PC-3 (cell line): ENCODE measurements at regions of chr6 and their contacts with region 1.

Region 1: GRCh38 chr6:160005861-160006540 is 37.1 kb downstream of the IGF2R start:
- DNase-seq: no peak
- ATAC-seq: no peak
- H3K4me3 ChIP-seq: no peak overlapping the region
- H3K27ac ChIP-seq: no peak overlapping the region
- H3K4me1 ChIP-seq: no peaks in the 10 kb centered on the region
- H3K27me3 ChIP-seq: no peaks in the 10 kb centered on the region
- CTCF ChIP-seq: no peak

Region 2: GRCh38 chr6:159899994-159900745 is 105.8 kb before region 1 on chr6:
- CTCF ChIA-PET with region 1: no interaction called
- POLR2A ChIA-PET with region 1: interaction called, 19 read pairs
- intact Hi-C with region 1: no loop called
- DNase-seq: peak; percentile 89
- ATAC-seq: peak; percentile 93
- H3K4me3 ChIP-seq: peak overlapping the region; percentile 53
- H3K27ac ChIP-seq: peak overlapping the region; percentile 96
- H3K4me1 ChIP-seq: peaks cover 23% of the 10 kb centered on the region
- H3K27me3 ChIP-seq: no peaks in the 10 kb centered on the region
- CTCF ChIP-seq: no peak

Region 3: GRCh38 chr6:160121981-160122380 is 116.0 kb after region 1 on chr6:
- CTCF ChIA-PET with region 1: no interaction called
- POLR2A ChIA-PET with region 1: no interaction called
- intact Hi-C with region 1: no loop called
- DNase-seq: no peak
- ATAC-seq: no peak
- H3K4me3 ChIP-seq: no peak overlapping the region
- H3K27ac ChIP-seq: no peak overlapping the region
- H3K4me1 ChIP-seq: no peaks in the 10 kb centered on the region
- H3K27me3 ChIP-seq: no peaks in the 10 kb centered on the region
- CTCF ChIP-seq: no peak